ENCODE measurements at regions of chr5 and their contacts with region 1.

Region 1: GRCh38 chr5:94376672-94377345 is 241.6 kb downstream of the KIAA0825 start:
- DNase-seq: no peak
- H3K4me3 ChIP-seq: no peak overlapping the region
- H3K27ac ChIP-seq: no peak overlapping the region
- H3K4me1 ChIP-seq: no peaks in the 10 kb centered on the region
- H3K27me3 ChIP-seq: no peaks in the 10 kb centered on the region
- CTCF ChIP-seq: no peak
- POLR2A ChIP-seq: no peak

Region 2: GRCh38 chr5:94928891-94929290 is 552.1 kb after region 1 on chr5:
- intact Hi-C with region 1: loop called (anchors 5 kb)
- DNase-seq: no peak
- H3K4me3 ChIP-seq: no peak overlapping the region
- H3K27ac ChIP-seq: no peak overlapping the region
- H3K4me1 ChIP-seq: no peaks in the 10 kb centered on the region
- H3K27me3 ChIP-seq: no peaks in the 10 kb centered on the region
- CTCF ChIP-seq: no peak
- POLR2A ChIP-seq: no peak